Transverse colon (tissue), 4 donors: ENCODE measurements at regions of chr22 and their contacts with region 1.

Region 1: GRCh38 chr22:36123673-36124630 is 36.6 kb downstream of the APOL3 start:
- DNase-seq: peak; percentile 96
- H3K4me3 ChIP-seq: peak overlapping the region in 2 of 4 donors; percentile 6 to 35
- H3K27ac ChIP-seq: peak overlapping the region; percentile 82 to 88 (median 86)
- H3K4me1 ChIP-seq: peaks cover 0 to 11% (median 2%) of the 10 kb centered on the region in 4 donors
- H3K27me3 ChIP-seq: peaks cover 5% of the 10 kb centered on the region
- CTCF ChIP-seq: peak; percentile 95 to 99 (median 98)
- EP300 ChIP-seq: peak; percentile 85
- POLR2A ChIP-seq: peak; percentile 49

Region 2: GRCh38 chr22:35399678-35400334 is 724.1 kb before region 1 on chr22 and contains the start of gene MCM5:
- in situ Hi-C with region 1: loop called in 1 of 4 experiments (anchors 25 kb)
- intact Hi-C with region 1: no loop called
- DNase-seq: peak; percentile 98
- H3K4me3 ChIP-seq: peak within 1 kb of the TSS; percentile 65 to 99 (median 74)
- H3K27ac ChIP-seq: peak within 1 kb of the TSS; percentile 70 to 80 (median 78)
- H3K4me1 ChIP-seq: peaks cover 7 to 27% (median 12%) of the 10 kb centered on the region in 4 donors
- H3K27me3 ChIP-seq: no peaks in the 10 kb centered on the region
- CTCF ChIP-seq: no peak
- EP300 ChIP-seq: no peak
- POLR2A ChIP-seq: no peak
- total RNA-seq, gene MCM5: 11.6 to 26.6 (median 13.3) TPM

Region 3: GRCh38 chr22:35627264-35628041 is 496.5 kb before region 1 on chr22:
- in situ Hi-C with region 1: loop called in 3 of 4 experiments (anchors 10 to 25 kb)
- intact Hi-C with region 1: loop called (anchors 5 kb)
- DNase-seq: peak; percentile 90
- H3K4me3 ChIP-seq: peak overlapping the region; percentile 43 to 58 (median 54)
- H3K27ac ChIP-seq: peak overlapping the region; percentile 88 to 96 (median 91)
- H3K4me1 ChIP-seq: peaks cover 7 to 16% (median 13%) of the 10 kb centered on the region in 4 donors
- H3K27me3 ChIP-seq: no peaks in the 10 kb centered on the region
- CTCF ChIP-seq: peak; percentile 37 to 58 (median 43)
- EP300 ChIP-seq: no peak
- POLR2A ChIP-seq: peak; percentile 80

Region 4: GRCh38 chr22:35930933-35931332 is 193.0 kb before region 1 on chr22:
- in situ Hi-C with region 1: loop called in 2 of 4 experiments (anchors 10 kb)
- intact Hi-C with region 1: loop called (anchors 10 kb)
- DNase-seq: no peak
- H3K4me3 ChIP-seq: no peak overlapping the region
- H3K27ac ChIP-seq: peak overlapping the region in 1 of 4 donors; percentile 8
- H3K4me1 ChIP-seq: peaks cover 0 to 12% (median 4%) of the 10 kb centered on the region in 4 donors
- H3K27me3 ChIP-seq: no peaks in the 10 kb centered on the region
- CTCF ChIP-seq: peak; percentile 52 to 66 (median 62)
- EP300 ChIP-seq: no peak
- POLR2A ChIP-seq: no peak

Region 5: GRCh38 chr22:36110306-36110881 is 13.6 kb before region 1 on chr22:
- in situ Hi-C with region 1: no loop called
- intact Hi-C with region 1: no loop called
- DNase-seq: no peak
- H3K4me3 ChIP-seq: no peak overlapping the region
- H3K27ac ChIP-seq: no peak overlapping the region
- H3K4me1 ChIP-seq: no peaks in the 10 kb centered on the region
- H3K27me3 ChIP-seq: no peaks in the 10 kb centered on the region
- CTCF ChIP-seq: no peak
- EP300 ChIP-seq: no peak
- POLR2A ChIP-seq: no peak